WTC11 (cell line): ENCODE measurements at regions of chr3 and their contacts with region 1.

Region 1: GRCh38 chr3:89216016-89216739 is 108.8 kb downstream of the EPHA3 start:
- DNase-seq: no peak
- ATAC-seq: no peak
- H3K4me3 Mint-ChIP-seq: no peak overlapping the region
- H3K27ac Mint-ChIP-seq: no peak overlapping the region
- H3K4me1 Mint-ChIP-seq: peaks cover 5% of the 10 kb centered on the region
- H3K27me3 Mint-ChIP-seq: no peaks in the 10 kb centered on the region
- CTCF ChIP-seq: no peak

Region 2: GRCh38 chr3:89179355-89180001 is 36.7 kb before region 1 on chr3:
- CTCF ChIA-PET with region 1: no interaction called
- POLR2A ChIA-PET with region 1: no interaction called
- DNase-seq: no peak
- ATAC-seq: no peak
- H3K4me3 Mint-ChIP-seq: no peak overlapping the region
- H3K27ac Mint-ChIP-seq: no peak overlapping the region
- H3K4me1 Mint-ChIP-seq: peaks cover 50% of the 10 kb centered on the region
- H3K27me3 Mint-ChIP-seq: no peaks in the 10 kb centered on the region
- CTCF ChIP-seq: no peak

Region 3: DNA sequence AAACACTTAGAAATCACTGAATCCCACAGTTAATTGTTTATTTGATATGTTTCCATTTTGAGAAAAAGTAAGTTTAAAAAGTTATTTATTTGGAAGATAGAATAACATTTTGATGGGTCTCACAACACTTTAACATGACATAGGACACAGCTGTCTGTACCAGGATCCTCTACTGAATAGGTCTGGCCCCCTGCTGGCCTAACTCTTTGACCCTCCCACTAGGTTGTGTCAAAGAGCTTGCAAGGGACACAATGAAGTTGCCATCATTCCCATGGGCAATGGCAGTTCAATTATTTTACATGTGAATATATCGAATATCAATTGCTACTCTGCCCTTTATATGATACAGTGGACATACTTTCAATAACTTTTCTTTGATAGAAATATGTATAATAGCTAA is 30.1 kb after region 1 on chr3:
- CTCF ChIA-PET with region 1: no interaction called
- POLR2A ChIA-PET with region 1: interaction called, 10 read pairs
- DNase-seq: peak; percentile 66
- ATAC-seq: peak; percentile 98
- H3K4me3 Mint-ChIP-seq: no peak overlapping the region
- H3K27ac Mint-ChIP-seq: no peak overlapping the region
- H3K4me1 Mint-ChIP-seq: peaks cover 40% of the 10 kb centered on the region
- H3K27me3 Mint-ChIP-seq: no peaks in the 10 kb centered on the region
- CTCF ChIP-seq: no peak